GM12878 (cell line): ENCODE measurements at regions of chr4 and their contacts with region 1.

Region 1: DNA sequence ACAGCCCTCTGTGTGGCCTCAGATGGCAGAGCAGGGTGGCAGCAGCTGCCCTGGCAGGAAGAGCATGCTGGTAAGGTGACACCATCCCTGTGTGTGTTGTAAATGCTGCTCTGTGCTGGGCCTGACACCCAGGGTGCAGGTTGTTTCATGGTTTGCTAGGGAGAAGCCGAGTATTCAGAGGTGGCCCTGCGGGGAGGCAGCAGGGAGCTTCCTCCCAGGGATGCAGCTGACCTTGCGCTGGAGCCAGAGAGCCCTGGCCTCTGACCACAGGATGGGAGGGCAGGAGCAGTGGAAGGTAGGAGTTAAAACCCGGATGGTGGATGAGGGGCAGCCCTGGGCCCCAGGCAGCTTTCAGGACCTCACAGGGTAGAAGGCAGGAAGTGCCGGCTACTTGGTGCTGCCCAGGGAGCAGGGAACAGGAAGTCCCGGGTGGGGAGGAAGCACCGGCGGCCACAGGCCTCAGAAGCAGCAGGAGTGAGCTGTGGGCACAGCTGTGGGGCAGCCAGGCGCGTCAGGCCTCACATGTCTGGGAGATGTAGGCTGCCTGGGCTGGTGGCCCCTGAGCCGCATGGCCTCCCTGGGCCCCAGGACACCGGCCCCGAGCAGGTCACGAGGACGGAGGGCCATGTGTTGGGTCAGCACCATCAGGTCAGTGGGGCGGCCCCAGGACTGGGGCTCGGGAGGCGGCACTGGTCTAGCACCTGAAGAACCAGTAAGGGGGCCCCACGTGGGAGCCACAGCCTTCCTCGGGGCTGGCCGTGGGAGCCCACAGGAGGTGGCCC is 19.1 kb downstream of the SH3BP2 start:
- DNase-seq: peak; percentile 40
- ATAC-seq: peak; percentile 82
- H3K4me3 ChIP-seq: peak overlapping the region; percentile 97
- H3K27ac ChIP-seq: peak overlapping the region; percentile 90
- H3K4me1 ChIP-seq: peaks cover 41% of the 10 kb centered on the region
- H3K27me3 ChIP-seq: no peaks in the 10 kb centered on the region
- CTCF ChIP-seq: no peak
- EP300 ChIP-seq: 0 out of 4 replicates have a peak, but pooled peaks of 1 of the 2 experiments have one; percentile 17
- POLR2A ChIP-seq: peak; percentile 88
- RAD21 ChIP-seq: no peak

Region 2: DNA sequence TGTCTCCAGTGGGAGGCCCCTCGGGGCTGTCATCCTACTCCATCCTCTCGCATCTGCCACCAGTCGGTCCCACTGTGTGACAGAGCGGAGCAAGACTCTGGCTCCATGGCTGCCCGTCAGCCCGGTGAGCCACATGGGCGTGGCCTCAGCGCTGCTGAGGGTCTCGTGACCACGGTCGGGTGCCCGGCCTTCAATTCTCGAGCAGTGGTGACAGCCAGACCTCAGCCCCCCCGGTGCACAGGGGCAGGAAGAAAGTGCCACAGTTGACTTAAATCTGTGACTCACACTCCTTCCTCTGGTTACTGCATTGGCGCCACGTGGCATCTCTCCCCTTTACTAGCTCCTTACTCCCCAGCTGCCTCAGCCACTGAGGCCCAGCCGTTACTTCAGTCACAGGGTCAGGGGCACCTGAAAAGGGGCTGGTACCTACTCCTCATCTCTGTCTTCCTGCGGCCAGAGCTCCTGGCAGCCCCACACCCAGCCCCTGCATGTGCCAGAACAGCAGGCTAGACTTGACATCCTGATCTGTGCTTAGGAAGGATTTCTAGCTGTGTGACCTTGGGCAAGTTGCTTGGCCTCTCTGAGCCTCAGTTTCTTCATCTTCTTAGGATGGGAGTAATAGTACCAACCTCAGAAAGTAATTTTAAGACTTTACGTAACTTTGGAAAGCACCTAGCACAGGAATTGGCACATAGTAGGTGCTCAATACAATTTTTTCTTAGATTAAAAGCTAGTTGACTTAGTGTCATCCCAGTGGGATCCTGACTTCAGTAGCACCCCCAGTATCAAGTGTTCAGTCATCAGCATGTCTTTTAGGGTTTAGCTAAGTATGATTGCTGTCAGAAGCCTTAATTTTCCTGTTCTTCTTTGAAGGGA is 122.0 kb before region 1 on chr4:
- CTCF ChIA-PET with region 1: no interaction called
- POLR2A ChIA-PET with region 1: no interaction called
- RAD21 ChIA-PET with region 1: no interaction called
- SMC1A ChIA-PET with region 1: no interaction called
- in situ Hi-C with region 1: no loop called
- intact Hi-C with region 1: no loop called
- DNase-seq: peak; percentile 51
- ATAC-seq: peak; percentile 87
- H3K4me3 ChIP-seq: no peak overlapping the region
- H3K27ac ChIP-seq: peak overlapping the region; percentile 66
- H3K4me1 ChIP-seq: peaks cover 40% of the 10 kb centered on the region
- H3K27me3 ChIP-seq: no peaks in the 10 kb centered on the region
- CTCF ChIP-seq: no peak
- EP300 ChIP-seq: no peak
- POLR2A ChIP-seq: peak; percentile 57
- RAD21 ChIP-seq: no peak

Region 3: DNA sequence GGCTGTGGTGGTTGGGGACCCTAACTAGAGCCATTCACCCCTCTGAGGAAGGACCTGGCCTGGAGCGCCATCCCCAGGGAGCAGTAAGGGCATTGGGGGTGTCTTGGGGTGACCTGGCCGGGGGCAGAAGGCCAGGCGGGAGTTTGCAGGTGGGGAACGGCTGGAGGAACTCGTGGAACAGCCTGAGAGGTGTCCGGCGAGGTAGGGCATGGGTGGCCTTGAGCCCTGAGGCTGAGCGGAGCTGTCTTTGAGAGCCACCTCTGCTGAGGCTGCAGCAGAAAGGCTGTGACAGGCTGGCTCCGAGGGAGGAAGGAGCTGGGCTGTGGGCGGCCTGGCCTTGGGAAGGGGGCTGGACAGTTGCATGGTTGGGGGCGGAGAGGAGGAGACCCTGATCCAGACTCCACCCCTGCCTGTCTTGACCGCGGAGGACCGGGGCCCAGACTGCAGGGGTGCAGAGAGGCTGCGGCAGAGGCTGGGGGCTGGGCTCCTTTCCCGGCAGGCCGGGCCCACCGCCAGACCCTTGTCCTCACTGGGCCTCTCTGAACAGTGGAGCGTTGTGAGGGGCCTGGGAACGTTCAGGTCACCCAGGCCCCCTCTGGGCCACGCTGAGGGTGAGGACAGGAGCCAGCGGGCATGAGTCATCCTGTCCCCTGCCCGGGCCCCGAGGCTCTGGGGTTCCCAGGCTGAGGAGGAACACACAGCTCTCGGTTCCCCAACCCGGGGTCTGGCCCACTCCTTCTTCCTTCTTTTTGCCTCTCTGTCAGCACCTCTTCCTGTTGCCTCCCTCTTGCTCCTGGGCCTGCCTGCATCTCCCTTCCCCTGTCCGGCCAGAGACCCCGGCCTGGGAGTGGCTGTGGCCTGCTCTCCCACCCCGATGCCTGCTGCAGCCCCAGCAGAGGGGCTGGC is 11.1 kb before region 1 on chr4:
- CTCF ChIA-PET with region 1: no interaction called
- POLR2A ChIA-PET with region 1: interaction called, 16 read pairs
- RAD21 ChIA-PET with region 1: interaction called, 4 read pairs
- SMC1A ChIA-PET with region 1: interaction called, 17 read pairs
- in situ Hi-C with region 1: no loop called
- intact Hi-C with region 1: loop called (anchors 1 kb)
- DNase-seq: peak; percentile 41
- ATAC-seq: peak; percentile 78
- H3K4me3 ChIP-seq: peak overlapping the region; percentile 77
- H3K27ac ChIP-seq: peak overlapping the region; percentile 82
- H3K4me1 ChIP-seq: peaks cover 62% of the 10 kb centered on the region
- H3K27me3 ChIP-seq: no peaks in the 10 kb centered on the region
- CTCF ChIP-seq: no peak
- EP300 ChIP-seq: 0 out of 4 replicates have a peak, but pooled peaks of 1 of the 2 experiments have one; percentile 43
- POLR2A ChIP-seq: no peak
- RAD21 ChIP-seq: no peak

Region 4: GRCh38 chr4:2968381-2968780 is 156.4 kb after region 1 on chr4:
- CTCF ChIA-PET with region 1: no interaction called
- POLR2A ChIA-PET with region 1: no interaction called
- RAD21 ChIA-PET with region 1: no interaction called
- SMC1A ChIA-PET with region 1: no interaction called
- in situ Hi-C with region 1: no loop called
- intact Hi-C with region 1: no loop called
- DNase-seq: no peak
- ATAC-seq: no peak
- H3K4me3 ChIP-seq: no peak overlapping the region
- H3K27ac ChIP-seq: no peak overlapping the region
- H3K4me1 ChIP-seq: no peaks in the 10 kb centered on the region; the same call in 1 of the 2 replicates
- H3K27me3 ChIP-seq: no peaks in the 10 kb centered on the region
- CTCF ChIP-seq: no peak
- EP300 ChIP-seq: no peak
- POLR2A ChIP-seq: no peak
- RAD21 ChIP-seq: no peak